ENCODE measurements at regions of chr6 and their contacts with region 1.

Region 1: GRCh38 chr6:100464903-100465700 is at the start of gene SIM1:
- DNase-seq: no peak
- H3K4me3 ChIP-seq: peak within 1 kb of the TSS; percentile 11 to 41
- H3K27ac ChIP-seq: no peak within 1 kb of the TSS
- H3K4me1 ChIP-seq: peaks cover 0 to 4% of the 10 kb centered on the region in 2 donors
- H3K27me3 ChIP-seq: peaks cover 68% of the 10 kb centered on the region
- CTCF ChIP-seq: no peak
- total RNA-seq, gene SIM1: not detected

Region 2: DNA sequence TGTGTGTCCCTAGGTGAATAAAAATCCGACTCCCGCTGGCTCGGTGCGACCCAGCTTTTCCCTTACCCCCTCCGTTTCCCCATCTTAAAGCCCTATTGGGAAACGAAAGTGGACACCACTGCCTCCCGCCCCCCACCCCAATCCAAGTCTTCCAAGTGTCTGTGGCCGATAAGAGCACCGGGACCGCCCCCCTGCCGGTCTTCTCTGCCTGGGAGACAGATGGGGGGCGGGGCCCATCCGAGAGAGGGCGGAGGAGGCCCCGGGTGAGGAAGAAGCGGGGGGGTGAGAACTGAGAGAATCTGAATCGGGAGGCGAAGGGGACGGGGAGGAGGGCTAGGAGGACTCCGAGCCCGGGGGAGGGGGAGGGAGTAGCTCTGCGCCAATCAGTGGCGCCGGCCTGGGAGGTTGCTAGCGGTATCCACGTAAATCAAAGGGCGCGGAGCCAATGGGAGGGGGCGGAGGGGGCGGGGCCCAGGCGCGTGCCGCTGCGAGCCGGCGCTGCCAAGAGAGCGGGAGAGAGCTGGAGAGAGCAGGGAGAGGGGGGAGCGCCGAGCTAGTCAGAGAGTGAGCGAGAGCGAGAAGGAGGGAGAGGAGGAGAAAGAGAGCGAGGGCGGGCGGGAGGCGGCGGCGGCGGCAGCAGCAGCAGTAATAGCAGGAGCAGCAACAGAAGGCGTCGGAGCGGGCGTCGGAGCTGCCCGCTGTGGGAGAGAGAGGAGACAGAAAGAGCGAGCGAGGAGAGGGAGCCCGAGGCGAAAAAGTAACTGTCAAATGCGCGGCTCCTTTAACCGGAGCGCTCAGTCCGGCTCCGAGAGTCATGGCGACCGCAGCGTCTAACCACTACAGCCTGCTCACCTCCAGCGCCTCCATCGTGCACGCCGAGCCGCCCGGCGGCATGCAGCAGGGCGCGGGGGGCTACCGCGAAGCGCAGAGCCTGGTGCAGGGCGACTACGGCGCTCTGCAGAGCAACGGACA is 1630.8 kb before region 1 on chr6 and contains the start of gene POU3F2:
- intact Hi-C with region 1: loop called (anchors 5 kb)
- DNase-seq: peak in 1 of 2 donors; percentile 87
- H3K4me3 ChIP-seq: peak within 1 kb of the TSS; percentile 65 to 73
- H3K27ac ChIP-seq: peak within 1 kb of the TSS in 1 of 2 donors; percentile 38
- H3K4me1 ChIP-seq: peaks cover 5 to 30% of the 10 kb centered on the region in 2 donors
- H3K27me3 ChIP-seq: peaks cover 51% of the 10 kb centered on the region
- CTCF ChIP-seq: no peak
- total RNA-seq, gene POU3F2: not detected

Region 3: GRCh38 chr6:99588618-99589289 is 876.3 kb before region 1 on chr6:
- intact Hi-C with region 1: loop called (anchors 10 kb)
- DNase-seq: peak in 1 of 2 donors; percentile 78
- H3K4me3 ChIP-seq: peak overlapping the region; percentile 66 to 76
- H3K27ac ChIP-seq: no peak overlapping the region
- H3K4me1 ChIP-seq: peaks cover 2 to 14% of the 10 kb centered on the region in 2 donors
- H3K27me3 ChIP-seq: peaks cover 23% of the 10 kb centered on the region
- CTCF ChIP-seq: peak in 2 of 3 experiments; percentile 20 to 55

Region 4: DNA sequence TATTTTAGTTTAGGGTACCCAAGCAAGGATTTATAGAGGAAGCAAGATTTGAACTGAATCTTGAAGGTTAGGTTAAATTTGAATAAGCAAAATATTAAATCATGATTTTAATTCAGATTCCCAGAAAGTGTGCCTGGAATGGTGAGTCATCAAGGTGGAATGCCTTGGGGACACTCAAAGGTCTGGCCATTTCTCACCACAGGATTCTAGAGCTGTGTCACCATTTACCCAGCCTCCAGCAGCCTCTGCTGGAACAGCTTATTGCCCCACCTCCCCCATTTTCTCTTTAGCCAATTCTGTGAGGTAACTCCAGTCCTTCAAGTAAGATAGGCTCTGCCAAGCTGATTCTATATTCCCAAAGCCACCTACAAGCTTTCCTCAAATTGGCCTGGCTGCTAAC is 181.8 kb before region 1 on chr6:
- intact Hi-C with region 1: no loop called
- DNase-seq: no peak
- H3K4me3 ChIP-seq: no peak overlapping the region
- H3K27ac ChIP-seq: no peak overlapping the region
- H3K4me1 ChIP-seq: no peaks in the 10 kb centered on the region
- H3K27me3 ChIP-seq: no peaks in the 10 kb centered on the region
- CTCF ChIP-seq: no peak

Region 5: DNA sequence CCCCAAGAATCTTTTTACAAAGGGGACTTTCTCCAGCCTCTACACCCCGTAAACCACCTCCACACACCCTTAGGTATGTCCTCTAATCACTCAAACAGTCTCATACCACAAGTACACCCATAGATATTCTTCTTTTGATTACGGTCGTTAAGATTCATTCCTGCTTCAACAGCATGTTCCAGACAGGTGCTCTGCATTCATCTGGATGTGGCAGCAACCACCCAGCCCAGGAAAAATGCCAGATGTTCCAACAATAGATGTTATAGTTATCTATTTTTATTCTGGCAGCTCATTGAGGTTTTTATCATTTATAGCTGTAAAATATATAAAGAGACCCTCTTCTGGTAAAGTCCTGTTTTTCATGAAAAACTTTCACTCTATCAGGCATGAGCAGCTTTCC is 61.1 kb before region 1 on chr6:
- intact Hi-C with region 1: no loop called
- DNase-seq: no peak
- H3K4me3 ChIP-seq: no peak overlapping the region
- H3K27ac ChIP-seq: no peak overlapping the region
- H3K4me1 ChIP-seq: no peaks in the 10 kb centered on the region
- H3K27me3 ChIP-seq: no peaks in the 10 kb centered on the region
- CTCF ChIP-seq: no peak

Region 6: GRCh38 chr6:100504786-100505737 is 40.0 kb after region 1 on chr6:
- intact Hi-C with region 1: loop called (anchors 5 kb)
- DNase-seq: peak in 1 of 2 donors; percentile 68
- H3K4me3 ChIP-seq: no peak overlapping the region
- H3K27ac ChIP-seq: peak overlapping the region; percentile 61 to 73
- H3K4me1 ChIP-seq: peaks cover 0 to 15% of the 10 kb centered on the region in 2 donors
- H3K27me3 ChIP-seq: no peaks in the 10 kb centered on the region
- CTCF ChIP-seq: no peak

Measured in ascending aorta (tissue), 2 donors.